ENCODE measurements at regions of chr7 and their contacts with region 1.

Region 1: DNA sequence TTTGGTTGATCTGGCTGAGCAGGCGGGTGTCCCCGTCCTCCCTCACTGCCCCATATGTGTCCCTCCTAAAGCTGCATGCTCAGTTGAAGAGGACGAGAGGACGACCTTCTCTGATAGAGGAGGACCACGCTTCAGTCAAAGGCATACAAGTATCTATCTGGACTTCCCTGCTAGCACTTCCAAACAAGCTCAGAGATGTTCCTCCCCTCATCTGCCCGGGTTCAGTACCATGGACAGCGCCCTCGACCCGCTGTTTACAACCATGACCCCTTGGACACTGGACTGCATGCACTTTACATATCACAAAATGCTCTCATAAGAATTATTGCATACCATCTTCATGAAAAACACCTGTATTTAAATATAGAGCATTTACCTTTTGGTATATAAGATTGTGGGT is 26.9 kb upstream of the TRIM56 start:
- DNase-seq: peak; percentile 73
- ATAC-seq: no peak
- H3K4me3 Mint-ChIP-seq: no peak overlapping the region
- H3K27ac Mint-ChIP-seq: no peak overlapping the region
- H3K4me1 Mint-ChIP-seq: peaks cover 2% of the 10 kb centered on the region
- H3K27me3 Mint-ChIP-seq: peaks cover 31% of the 10 kb centered on the region

Region 2: DNA sequence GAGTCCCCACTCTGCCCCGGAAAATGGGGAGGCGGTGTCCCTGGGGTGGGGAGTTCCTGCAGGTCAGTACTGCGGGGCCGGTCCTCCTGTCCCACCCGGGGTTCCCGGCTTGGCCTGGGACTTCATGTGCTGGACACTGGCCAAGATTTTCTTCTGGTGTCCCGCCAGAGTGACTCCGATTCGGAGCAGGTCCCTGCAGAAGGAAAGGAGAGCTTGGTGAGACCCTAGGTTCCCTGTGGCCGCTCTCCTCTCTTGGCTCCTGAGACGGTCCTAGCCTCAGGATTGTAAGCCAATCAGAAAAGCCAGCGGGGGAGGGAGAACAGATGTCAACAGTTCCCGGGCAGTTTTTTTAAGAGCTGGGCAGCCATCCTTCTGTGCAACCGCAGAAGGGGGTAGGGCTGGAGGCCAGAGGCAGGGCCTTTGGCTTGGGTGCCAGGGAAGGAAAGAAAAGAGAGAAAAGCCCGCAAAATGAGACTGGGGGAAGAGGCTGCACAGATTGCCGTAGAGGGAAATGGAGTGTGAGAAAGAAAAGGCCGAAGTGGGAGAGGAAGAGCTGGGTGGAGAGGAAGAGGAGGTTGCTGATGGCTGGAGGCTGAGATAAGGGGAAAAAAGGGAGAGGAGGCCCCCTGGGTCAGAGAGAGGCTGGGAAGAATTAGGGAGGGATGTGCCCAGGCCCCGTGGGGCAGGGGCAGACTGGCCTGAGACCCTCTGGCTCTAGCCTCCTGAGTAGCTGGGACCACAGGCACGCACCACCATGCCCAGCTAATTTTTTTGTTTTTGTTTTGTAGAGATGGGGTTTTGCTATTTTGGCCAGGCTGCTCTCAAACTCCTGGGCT is 254.7 kb before region 1 on chr7:
- CTCF ChIA-PET with region 1: interaction called, 5 read pairs
- POLR2A ChIA-PET with region 1: no interaction called
- intact Hi-C with region 1: loop called (anchors 2 to 10 kb)
- DNase-seq: peak; percentile 44
- ATAC-seq: peak; percentile 39
- H3K4me3 Mint-ChIP-seq: no peak overlapping the region
- H3K27ac Mint-ChIP-seq: no peak overlapping the region
- H3K4me1 Mint-ChIP-seq: peaks cover 4% of the 10 kb centered on the region
- H3K27me3 Mint-ChIP-seq: peaks cover 7% of the 10 kb centered on the region

Region 3: DNA sequence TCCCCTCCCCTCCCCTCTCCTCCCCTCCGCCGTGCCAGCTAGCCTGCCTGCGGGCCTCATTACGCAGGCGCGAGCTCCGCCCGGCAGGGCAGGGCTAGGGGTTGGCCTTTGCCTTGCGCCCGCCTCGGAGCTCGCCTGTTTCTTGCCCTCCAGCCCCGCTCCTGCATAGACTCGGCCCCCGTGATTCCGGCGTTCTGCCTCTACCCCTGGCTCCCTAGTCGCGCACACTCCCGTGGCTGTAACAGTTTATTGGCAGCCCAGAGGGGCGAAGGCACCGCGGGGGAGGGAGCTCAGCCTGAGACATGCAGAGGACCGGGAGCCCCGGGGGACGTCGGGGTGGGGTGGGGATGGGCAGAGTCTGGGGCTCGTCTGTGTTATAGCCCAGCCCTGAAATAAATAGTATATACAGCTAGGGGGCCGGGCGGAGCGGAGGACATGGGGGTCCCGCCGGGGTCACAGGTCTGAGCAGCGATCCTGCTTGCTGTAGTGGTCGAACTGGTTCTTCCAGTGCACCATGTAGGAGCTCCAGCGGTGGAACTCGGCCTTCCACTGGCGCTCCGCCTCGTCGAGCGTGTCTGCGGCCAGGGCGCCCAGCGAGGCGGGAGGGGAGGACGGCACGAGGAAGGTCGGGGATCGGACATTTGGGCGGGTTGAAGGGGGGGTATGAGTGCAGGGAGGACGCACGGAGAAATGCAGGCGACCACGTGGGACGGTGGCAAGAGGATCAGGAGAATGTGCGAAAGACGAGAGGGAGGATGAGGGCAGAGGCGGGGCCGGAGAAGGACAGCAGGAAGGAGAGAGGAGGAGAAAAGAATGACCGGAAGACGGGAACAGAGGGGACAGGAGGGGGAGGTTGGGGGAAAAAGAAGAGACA is 168.4 kb before region 1 on chr7:
- CTCF ChIA-PET with region 1: interaction called, 13 read pairs
- POLR2A ChIA-PET with region 1: no interaction called
- intact Hi-C with region 1: no loop called
- DNase-seq: peak; percentile 96
- ATAC-seq: peak; percentile 95
- H3K4me3 Mint-ChIP-seq: peak overlapping the region; percentile 77
- H3K27ac Mint-ChIP-seq: no peak overlapping the region
- H3K4me1 Mint-ChIP-seq: peaks cover 38% of the 10 kb centered on the region
- H3K27me3 Mint-ChIP-seq: peaks cover 14% of the 10 kb centered on the region

Region 4: DNA sequence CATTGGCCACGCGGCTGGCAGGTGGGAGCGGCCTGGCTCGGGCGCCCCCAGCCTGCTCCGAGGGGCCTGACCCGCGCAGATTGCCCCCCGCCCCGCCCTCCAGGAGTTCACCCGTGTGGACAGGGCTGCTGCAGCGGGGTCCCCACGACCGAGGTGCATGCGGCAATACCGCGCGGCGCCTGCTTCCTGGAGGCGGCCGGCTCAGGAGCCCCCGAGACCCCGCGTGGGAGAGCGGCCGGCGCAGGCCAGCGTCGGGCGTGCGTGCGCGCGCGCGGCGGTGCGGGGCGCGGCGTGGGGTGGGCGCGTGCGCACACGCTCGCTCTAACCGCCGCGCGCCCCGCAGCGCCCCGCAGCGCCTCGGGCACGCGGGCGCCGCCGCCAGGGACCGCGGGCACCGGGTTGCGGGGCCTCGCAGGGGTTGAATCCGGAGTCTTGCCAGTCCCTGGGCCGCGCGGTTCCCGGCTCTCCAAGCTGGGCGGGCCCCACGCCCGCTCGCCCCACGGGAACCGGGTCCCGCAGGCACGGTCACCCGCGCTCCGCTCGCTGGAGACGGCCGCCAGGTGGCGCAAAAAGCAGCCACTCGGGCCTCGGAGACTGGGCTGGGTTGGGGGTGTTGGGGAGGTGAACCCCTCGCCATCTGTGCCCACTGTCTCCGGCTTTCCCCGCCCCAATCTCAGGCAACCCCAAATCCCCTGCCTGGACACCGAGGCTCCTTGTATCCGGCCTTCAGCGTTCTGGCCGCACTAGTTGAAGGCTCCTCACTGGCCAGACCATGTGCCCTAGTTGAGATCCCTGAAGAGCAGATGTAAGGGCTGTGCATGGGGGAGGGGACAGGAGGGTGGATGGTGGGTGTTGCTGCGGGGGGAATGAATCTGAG is 161.4 kb before region 1 on chr7:
- CTCF ChIA-PET with region 1: interaction called, 13 read pairs
- POLR2A ChIA-PET with region 1: no interaction called
- intact Hi-C with region 1: loop called (anchors 1 kb)
- DNase-seq: peak; percentile 74
- ATAC-seq: peak; percentile 48
- H3K4me3 Mint-ChIP-seq: no peak overlapping the region
- H3K27ac Mint-ChIP-seq: no peak overlapping the region
- H3K4me1 Mint-ChIP-seq: peaks cover 9% of the 10 kb centered on the region
- H3K27me3 Mint-ChIP-seq: peaks cover 31% of the 10 kb centered on the region

Region 5: DNA sequence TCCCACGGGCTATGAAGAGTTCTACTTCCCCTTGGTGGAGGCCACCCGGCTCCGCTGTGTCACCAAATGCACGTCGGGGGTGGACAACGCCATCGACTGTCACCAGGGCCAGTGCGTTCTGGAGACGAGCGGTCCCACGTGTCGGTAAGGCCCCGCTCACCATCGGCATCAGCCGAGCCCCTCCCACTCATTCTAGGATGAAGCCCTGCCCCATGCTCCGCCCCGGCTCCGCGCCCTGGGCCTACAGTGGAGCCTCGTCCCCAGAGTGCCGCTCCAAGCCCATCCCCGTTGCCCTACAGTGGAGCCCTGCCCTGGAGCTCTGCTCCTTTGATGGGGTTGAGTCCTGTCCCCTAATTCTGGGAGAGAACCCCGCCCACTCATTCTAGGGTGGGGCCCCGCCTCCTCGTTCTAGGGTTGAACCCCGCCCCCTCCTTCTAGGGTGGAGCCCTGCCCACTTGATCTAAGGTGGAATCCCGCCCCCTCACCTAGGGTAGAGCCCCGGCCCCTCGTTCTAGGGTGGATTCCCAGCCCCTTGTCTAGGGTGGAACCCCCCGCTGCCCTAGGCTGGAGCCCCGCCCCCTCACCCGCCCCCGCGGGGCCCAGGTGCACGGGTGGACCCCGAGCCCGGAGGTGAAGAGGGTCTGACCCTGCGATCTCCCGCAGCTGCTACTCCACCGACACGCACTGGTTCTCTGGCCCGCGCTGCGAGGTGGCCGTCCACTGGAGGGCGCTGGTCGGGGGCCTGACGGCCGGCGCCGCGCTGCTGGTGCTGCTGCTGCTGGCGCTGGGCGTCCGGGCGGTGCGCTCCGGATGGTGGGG is 92.4 kb before region 1 on chr7:
- CTCF ChIA-PET with region 1: interaction called, 4 read pairs
- POLR2A ChIA-PET with region 1: no interaction called
- intact Hi-C with region 1: loop called in 1 of 2 experiments (anchors 1 kb)
- DNase-seq: peak; percentile 91
- ATAC-seq: peak; percentile 87
- H3K4me3 Mint-ChIP-seq: peak overlapping the region; percentile 26
- H3K27ac Mint-ChIP-seq: no peak overlapping the region
- H3K4me1 Mint-ChIP-seq: peaks cover 9% of the 10 kb centered on the region
- H3K27me3 Mint-ChIP-seq: peaks cover 48% of the 10 kb centered on the region

Region 6: GRCh38 chr7:101077303-101078089 is 19.1 kb after region 1 on chr7:
- CTCF ChIA-PET with region 1: interaction called, 10 read pairs
- POLR2A ChIA-PET with region 1: no interaction called
- intact Hi-C with region 1: no loop called
- DNase-seq: peak; percentile 91
- ATAC-seq: peak; percentile 99
- H3K4me3 Mint-ChIP-seq: no peak overlapping the region
- H3K27ac Mint-ChIP-seq: no peak overlapping the region
- H3K4me1 Mint-ChIP-seq: peaks cover 7% of the 10 kb centered on the region
- H3K27me3 Mint-ChIP-seq: peaks cover 3% of the 10 kb centered on the region

Region 7: DNA sequence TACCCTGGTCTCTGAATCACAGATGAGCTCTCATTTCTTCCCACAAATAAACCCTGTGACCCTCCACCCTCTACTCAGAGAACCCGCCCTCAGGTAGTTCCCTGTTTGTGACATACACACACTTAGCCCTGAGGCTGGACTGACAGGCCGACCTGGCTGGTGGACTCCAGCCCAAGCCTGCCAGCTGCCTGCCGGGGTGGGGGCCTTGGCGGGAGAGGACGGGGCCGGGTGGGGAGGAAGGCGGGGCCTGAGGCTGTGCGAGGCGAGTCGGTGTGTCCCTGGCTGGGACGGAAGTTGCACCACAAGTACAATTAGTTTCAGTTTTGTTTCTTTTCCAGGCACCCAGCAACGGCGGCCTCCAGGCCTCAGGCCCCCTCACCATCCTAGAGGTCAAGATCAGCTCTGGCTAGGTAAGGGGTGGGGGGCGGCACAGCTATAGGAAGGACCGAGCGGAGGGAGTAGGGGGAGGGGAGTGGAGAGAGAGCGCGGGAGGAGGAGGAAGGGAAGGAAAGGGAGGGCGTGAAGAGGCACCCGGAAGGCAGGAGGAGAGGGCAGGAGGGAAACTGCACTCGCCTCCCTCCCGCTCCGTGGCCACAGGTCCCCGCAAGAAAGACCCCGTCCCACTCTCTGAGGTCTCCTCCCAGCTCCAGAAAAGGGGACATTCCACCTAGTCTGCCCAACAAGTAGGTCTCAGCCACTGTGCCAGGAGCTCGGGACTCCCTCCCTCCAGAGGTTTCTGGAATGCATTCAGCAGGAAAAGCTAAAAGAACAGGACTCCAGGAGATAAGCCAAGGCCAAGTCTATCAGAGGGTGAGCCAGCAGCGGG is 27.0 kb after region 1 on chr7 and contains the start of gene TRIM56:
- CTCF ChIA-PET with region 1: interaction called, 3 read pairs
- POLR2A ChIA-PET with region 1: no interaction called
- intact Hi-C with region 1: loop called in 1 of 2 experiments (anchors 2 kb)
- DNase-seq: peak; percentile 88
- ATAC-seq: peak; percentile 90
- H3K4me3 Mint-ChIP-seq: peak within 1 kb of the TSS; percentile 94
- H3K27ac Mint-ChIP-seq: peak within 1 kb of the TSS; percentile 98
- H3K4me1 Mint-ChIP-seq: peaks cover 26% of the 10 kb centered on the region
- H3K27me3 Mint-ChIP-seq: no peaks in the 10 kb centered on the region
- total RNA-seq, gene TRIM56: 35.3 to 40.8 TPM